ENCODE measurements at regions of chr10 and their contacts with region 1.

Region 1: GRCh38 chr10:69800109-69800508 is 1.6 kb upstream of the COL13A1 start:
- H3K4me3 ChIP-seq: no peak overlapping the region
- H3K27ac ChIP-seq: no peak overlapping the region
- H3K4me1 ChIP-seq: peaks cover 2% of the 10 kb centered on the region; the same call in 1 of the 2 replicates
- CTCF ChIP-seq: no peak

Region 2: GRCh38 chr10:69639291-69640195 is 160.6 kb before region 1 on chr10:
- CTCF ChIA-PET with region 1: interaction called, 11 read pairs
- POLR2A ChIA-PET with region 1: no interaction called
- H3K4me3 ChIP-seq: no peak overlapping the region
- H3K27ac ChIP-seq: no peak overlapping the region
- H3K4me1 ChIP-seq: no peaks in the 10 kb centered on the region
- CTCF ChIP-seq: peak; percentile 66

Region 3: GRCh38 chr10:69742928-69743602 is 57.0 kb before region 1 on chr10:
- CTCF ChIA-PET with region 1: interaction called, 34 read pairs
- POLR2A ChIA-PET with region 1: no interaction called
- H3K4me3 ChIP-seq: no peak overlapping the region
- H3K27ac ChIP-seq: no peak overlapping the region
- H3K4me1 ChIP-seq: no peaks in the 10 kb centered on the region
- CTCF ChIP-seq: peak; percentile 48

Region 4: GRCh38 chr10:69769395-69769992 is 30.6 kb before region 1 on chr10:
- CTCF ChIA-PET with region 1: interaction called, 19 read pairs
- POLR2A ChIA-PET with region 1: no interaction called
- H3K4me3 ChIP-seq: no peak overlapping the region
- H3K27ac ChIP-seq: no peak overlapping the region
- H3K4me1 ChIP-seq: peaks cover 5% of the 10 kb centered on the region
- CTCF ChIP-seq: no peak

Region 5: GRCh38 chr10:69786791-69787190 is 13.3 kb before region 1 on chr10:
- CTCF ChIA-PET with region 1: interaction called, 74 read pairs
- POLR2A ChIA-PET with region 1: no interaction called
- H3K4me3 ChIP-seq: no peak overlapping the region
- H3K27ac ChIP-seq: no peak overlapping the region
- H3K4me1 ChIP-seq: no peaks in the 10 kb centered on the region
- CTCF ChIP-seq: no peak

Region 6: GRCh38 chr10:69810675-69811397 is 10.7 kb after region 1 on chr10:
- CTCF ChIA-PET with region 1: interaction called, 10 read pairs
- POLR2A ChIA-PET with region 1: no interaction called
- H3K4me3 ChIP-seq: no peak overlapping the region
- H3K27ac ChIP-seq: no peak overlapping the region
- H3K4me1 ChIP-seq: no peaks in the 10 kb centered on the region
- CTCF ChIP-seq: no peak

Region 7: GRCh38 chr10:69826789-69827554 is 26.9 kb after region 1 on chr10:
- CTCF ChIA-PET with region 1: no interaction called
- POLR2A ChIA-PET with region 1: no interaction called
- H3K4me3 ChIP-seq: no peak overlapping the region
- H3K27ac ChIP-seq: no peak overlapping the region
- H3K4me1 ChIP-seq: no peaks in the 10 kb centered on the region
- CTCF ChIP-seq: no peak